Sciatic nerve (tissue), 2 donors: ENCODE measurements at regions of chr7 and their contacts with region 1.

Region 1: GRCh38 chr7:85237721-85238120 is 50.9 kb upstream of the SEMA3D start:
- DNase-seq: no peak
- ATAC-seq: no peak

Region 2: DNA sequence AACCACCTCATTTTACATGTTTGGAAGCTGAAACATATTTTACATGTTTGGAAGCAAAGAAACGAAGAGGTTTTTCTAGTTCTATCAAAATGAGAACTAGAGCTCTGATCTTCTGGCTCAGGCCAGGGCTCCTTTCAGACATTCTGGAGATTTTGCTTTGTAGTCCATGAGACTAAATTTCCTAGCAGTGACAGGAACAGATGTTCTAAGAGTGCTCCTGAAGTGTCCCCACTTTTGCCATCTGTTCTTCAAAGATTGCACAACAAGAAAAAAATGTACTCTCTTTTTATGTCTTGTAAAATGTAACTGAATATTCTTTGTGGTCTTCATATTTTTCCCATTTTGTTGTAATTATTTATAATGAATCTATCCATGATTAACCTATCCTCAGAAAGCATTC is 1878.6 kb before region 1 on chr7:
- intact Hi-C with region 1: loop called (anchors 10 kb)
- DNase-seq: no peak
- ATAC-seq: no peak

Region 3: GRCh38 chr7:84058311-84059076 is 1179.2 kb before region 1 on chr7:
- intact Hi-C with region 1: no loop called
- DNase-seq: no peak
- ATAC-seq: no peak